Activated naive CD4-positive, alpha-beta T cell treated with anti-CD3 and anti-CD28 coated beads for 36 hours (primary cell): ENCODE measurements at regions of chr1 and their contacts with region 1.

Region 1: GRCh38 chr1:150515328-150516048 is at the start of gene FALEC:
- DNase-seq: peak; percentile 91
- H3K4me3 Mint-ChIP-seq: peak within 1 kb of the TSS; percentile 90
- H3K27ac Mint-ChIP-seq: peak within 1 kb of the TSS; percentile 20
- H3K4me1 Mint-ChIP-seq: peaks cover 9% of the 10 kb centered on the region
- H3K27me3 Mint-ChIP-seq: no peaks in the 10 kb centered on the region
- total RNA-seq, gene FALEC: not detected

Region 2: GRCh38 chr1:150449451-150449850 is 66.0 kb before region 1 on chr1:
- CTCF ChIA-PET with region 1: no interaction called
- intact Hi-C with region 1: no loop called
- DNase-seq: no peak
- H3K4me3 Mint-ChIP-seq: no peak overlapping the region
- H3K27ac Mint-ChIP-seq: no peak overlapping the region
- H3K4me1 Mint-ChIP-seq: peaks cover 4% of the 10 kb centered on the region
- H3K27me3 Mint-ChIP-seq: no peaks in the 10 kb centered on the region

Region 3: GRCh38 chr1:150464422-150464826 is 51.1 kb before region 1 on chr1:
- CTCF ChIA-PET with region 1: interaction called, 3 read pairs
- intact Hi-C with region 1: loop called (anchors 5 kb)
- DNase-seq: peak; percentile 79
- H3K4me3 Mint-ChIP-seq: no peak overlapping the region
- H3K27ac Mint-ChIP-seq: peak overlapping the region; percentile 41
- H3K4me1 Mint-ChIP-seq: peaks cover 2% of the 10 kb centered on the region
- H3K27me3 Mint-ChIP-seq: no peaks in the 10 kb centered on the region

Region 4: GRCh38 chr1:150683914-150684313 is 168.4 kb after region 1 on chr1:
- CTCF ChIA-PET with region 1: no interaction called
- intact Hi-C with region 1: no loop called
- DNase-seq: no peak
- H3K4me3 Mint-ChIP-seq: no peak overlapping the region
- H3K27ac Mint-ChIP-seq: no peak overlapping the region
- H3K4me1 Mint-ChIP-seq: peaks cover 9% of the 10 kb centered on the region
- H3K27me3 Mint-ChIP-seq: no peaks in the 10 kb centered on the region